HAP-1 (cell line): ENCODE measurements at regions of chr19 and their contacts with region 1.

Region 1: GRCh38 chr19:53365134-53365898 is at the start of gene ZNF525:
- DNase-seq: no peak
- H3K4me3 ChIP-seq: no peak within 1 kb of the TSS
- H3K4me1 ChIP-seq: no peaks in the 10 kb centered on the region
- H3K27me3 ChIP-seq: no peaks in the 10 kb centered on the region

Region 2: GRCh38 chr19:52690369-52691214 is 674.7 kb before region 1 on chr19:
- in situ Hi-C with region 1: loop called (anchors 25 kb)
- DNase-seq: peak; percentile 81 to 94
- H3K4me3 ChIP-seq: peak overlapping the region; percentile 48
- H3K4me1 ChIP-seq: no peaks in the 10 kb centered on the region; the same call in 1 of the 2 replicates
- H3K27me3 ChIP-seq: no peaks in the 10 kb centered on the region

Region 3: GRCh38 chr19:53498581-53498980 is 133.3 kb after region 1 on chr19:
- in situ Hi-C with region 1: no loop called
- DNase-seq: no peak
- H3K4me3 ChIP-seq: no peak overlapping the region
- H3K4me1 ChIP-seq: no peaks in the 10 kb centered on the region
- H3K27me3 ChIP-seq: no peaks in the 10 kb centered on the region